ENCODE measurements at regions of chr4 and their contacts with region 1.

Region 1: DNA sequence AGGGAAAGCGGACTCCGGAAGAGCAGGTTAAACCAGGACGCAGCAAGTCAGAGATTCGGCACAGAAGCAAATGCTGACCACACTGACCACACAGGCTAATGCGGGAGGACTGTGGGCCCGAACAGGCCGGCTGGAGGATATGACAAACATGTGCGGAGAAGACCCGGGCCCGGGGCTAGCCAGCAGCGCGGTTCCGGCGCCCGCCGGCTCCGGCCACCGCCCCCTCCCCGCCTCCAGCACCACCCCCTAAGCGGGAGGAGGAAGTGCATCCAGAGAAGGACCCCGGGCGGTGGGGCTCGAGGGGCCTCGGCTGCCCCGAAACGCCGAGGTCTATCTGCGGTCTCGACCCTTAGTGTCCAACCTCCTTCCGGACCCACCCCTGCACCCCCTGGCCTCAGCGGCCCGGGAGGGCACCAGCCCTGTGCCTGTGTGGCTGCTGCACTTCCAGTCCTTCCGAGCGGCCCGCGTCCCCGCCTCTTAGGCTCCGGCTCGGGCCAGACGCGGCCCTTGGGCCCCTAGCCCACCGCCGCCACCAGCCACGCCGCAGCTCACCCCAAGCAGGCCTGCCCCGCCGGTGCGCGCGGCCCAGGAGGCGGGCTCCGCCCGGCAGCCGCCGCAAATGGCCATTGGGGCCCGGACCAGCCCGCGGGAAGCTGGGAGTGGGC is 2.1 kb downstream of the ELOVL6 start:
- DNase-seq: peak; percentile 74
- ATAC-seq: peak; percentile 84

Region 2: DNA sequence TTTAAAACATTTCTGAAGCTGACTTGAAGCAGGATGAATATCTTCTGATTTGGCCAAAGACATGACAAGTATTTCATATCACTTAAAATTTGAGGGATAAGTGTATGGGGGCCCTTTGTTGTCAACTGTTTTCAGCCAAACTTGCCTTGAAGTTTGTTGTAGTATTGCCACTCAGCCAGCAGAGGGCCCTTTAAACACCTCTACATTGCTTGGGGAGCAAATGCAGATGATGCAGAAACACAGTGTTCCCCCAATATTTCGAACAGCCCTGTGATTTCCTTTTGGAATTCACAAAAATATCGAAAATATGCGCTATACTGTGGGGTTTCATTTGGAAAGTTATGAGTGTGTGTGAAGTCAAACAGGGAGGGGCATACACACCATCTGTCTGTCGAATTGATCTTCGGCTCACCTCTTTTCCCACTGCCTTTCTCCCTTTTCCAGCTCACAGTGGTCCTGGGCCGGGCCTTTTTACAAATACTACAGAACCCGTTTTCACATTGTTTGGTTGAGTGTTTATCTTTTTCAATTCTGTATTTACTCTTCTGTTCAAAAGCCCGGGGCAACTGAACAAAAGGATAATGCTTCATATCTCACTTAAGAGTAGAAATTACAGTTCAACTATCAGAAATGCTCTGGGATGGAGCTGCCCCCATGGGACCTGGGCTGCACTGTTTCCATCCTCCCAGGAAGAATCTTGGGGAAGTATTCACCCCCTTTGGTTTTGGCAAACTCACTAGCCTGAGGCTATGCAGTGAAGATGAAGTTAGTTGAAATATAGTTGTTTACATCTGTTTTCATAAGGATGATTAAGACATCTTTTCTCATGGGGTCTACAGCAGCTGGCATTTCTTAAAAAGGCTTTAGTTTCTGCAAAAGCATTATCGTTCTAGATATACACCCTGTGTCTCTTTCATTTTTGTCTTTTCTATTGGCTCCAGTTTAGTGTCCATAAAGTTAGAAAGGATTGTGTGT is 146.1 kb before region 1 on chr4:
- intact Hi-C with region 1: loop called (anchors 5 kb)
- DNase-seq: no peak
- ATAC-seq: peak; percentile 28

Region 3: GRCh38 chr4:110510955-110511544 is 314.7 kb after region 1 on chr4:
- intact Hi-C with region 1: loop called (anchors 5 kb)
- DNase-seq: no peak
- ATAC-seq: peak; percentile 48

Region 4: DNA sequence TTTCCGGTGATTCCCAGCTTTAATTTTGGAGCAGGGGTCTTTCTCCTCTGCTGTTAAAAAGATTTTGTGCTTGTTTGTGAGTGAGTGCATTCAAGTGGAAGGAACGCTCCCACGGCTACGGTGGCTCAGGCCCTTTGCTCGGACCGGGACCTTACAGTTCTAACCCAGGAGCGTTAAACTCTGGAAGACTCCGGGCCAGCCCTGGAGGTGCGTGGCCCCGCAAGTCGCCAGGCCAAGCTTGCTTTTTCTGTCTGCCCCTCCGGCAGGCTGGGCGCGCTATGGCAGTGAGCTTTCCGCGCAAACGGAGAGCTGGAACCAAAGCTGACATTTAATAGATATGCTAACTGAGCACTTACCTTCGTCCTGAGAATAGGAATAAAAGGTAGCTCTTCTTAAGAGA is 444.9 kb after region 1 on chr4:
- intact Hi-C with region 1: no loop called
- DNase-seq: no peak
- ATAC-seq: no peak